ENCODE measurements at regions of chr11 and their contacts with region 1.

Region 1: GRCh38 chr11:79493555-79494171 is 52.8 kb upstream of the TENM4 start:
- DNase-seq: peak in 1 of 2 donors; percentile 80
- H3K4me3 ChIP-seq: no peak overlapping the region
- H3K27ac ChIP-seq: no peak overlapping the region
- H3K4me1 ChIP-seq: no peaks in the 10 kb centered on the region
- H3K27me3 ChIP-seq: no peaks in the 10 kb centered on the region
- CTCF ChIP-seq: peak; percentile 64 to 88 (median 81)

Region 2: DNA sequence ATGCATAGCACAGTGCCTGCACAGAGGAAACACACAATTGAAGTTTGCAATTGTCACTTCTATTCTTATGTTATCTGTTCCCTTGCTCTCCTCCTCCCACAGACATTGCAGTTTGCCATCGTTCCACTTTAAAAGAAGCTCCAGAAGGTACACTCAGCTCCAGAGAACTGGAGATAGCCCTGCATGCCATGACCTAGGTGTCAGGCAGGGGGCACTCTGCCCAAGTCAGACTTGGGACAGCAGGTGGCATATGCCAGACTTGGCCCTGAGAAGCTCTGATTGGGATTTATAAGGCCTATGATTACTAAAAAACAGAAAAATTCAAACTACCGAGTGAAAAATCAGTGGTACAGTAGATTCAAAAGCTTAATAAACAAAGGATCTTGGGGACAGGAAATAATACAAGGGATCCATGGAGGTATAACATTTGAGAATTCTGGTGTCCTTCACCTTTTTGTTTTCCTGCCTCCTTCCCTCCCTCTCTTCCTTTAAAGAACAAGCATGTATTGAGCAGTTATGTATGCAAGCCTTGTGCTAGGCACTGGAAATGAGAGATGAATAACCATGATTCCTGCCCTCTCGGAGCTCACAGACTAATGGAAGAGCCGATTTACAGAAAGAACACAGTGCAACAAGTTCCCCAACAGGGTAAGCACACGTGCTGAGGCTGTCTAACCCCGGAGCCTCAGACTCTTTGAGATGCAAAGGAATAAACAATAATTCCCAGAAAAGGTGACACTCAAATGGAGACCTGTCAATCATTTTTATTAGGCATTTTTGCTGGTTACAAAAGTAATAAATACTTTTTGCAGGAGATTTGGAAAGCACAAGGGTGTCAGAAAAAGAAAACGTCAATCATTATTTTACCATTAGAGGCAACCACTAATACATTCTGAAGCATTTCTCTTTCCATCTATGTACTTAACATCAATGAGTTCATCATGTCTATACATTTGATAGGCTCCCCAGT is 92.7 kb before region 1 on chr11:
- intact Hi-C with region 1: loop called (anchors 1 kb)
- DNase-seq: peak in 1 of 2 donors; percentile 70
- H3K4me3 ChIP-seq: no peak overlapping the region
- H3K27ac ChIP-seq: no peak overlapping the region
- H3K4me1 ChIP-seq: no peaks in the 10 kb centered on the region
- H3K27me3 ChIP-seq: no peaks in the 10 kb centered on the region
- CTCF ChIP-seq: peak; percentile 48 to 75 (median 74)

Region 3: GRCh38 chr11:79461144-79461543 is 32.5 kb before region 1 on chr11:
- intact Hi-C with region 1: loop called (anchors 1 kb)
- DNase-seq: no peak
- H3K4me3 ChIP-seq: no peak overlapping the region
- H3K27ac ChIP-seq: no peak overlapping the region
- H3K4me1 ChIP-seq: no peaks in the 10 kb centered on the region
- H3K27me3 ChIP-seq: no peaks in the 10 kb centered on the region
- CTCF ChIP-seq: peak in 2 of 3 experiments; percentile 43 to 59

Measured in ascending aorta (tissue), 2 donors.